ENCODE measurements at regions of chr10 and their contacts with region 1.

Region 1: GRCh38 chr10:76858721-76859120 is 778.9 kb downstream of the KCNMA1 start:
- DNase-seq: no peak
- H3K4me3 ChIP-seq: no peak overlapping the region
- H3K27ac ChIP-seq: no peak overlapping the region
- H3K4me1 ChIP-seq: no peaks in the 10 kb centered on the region
- H3K27me3 ChIP-seq: no peaks in the 10 kb centered on the region
- CTCF ChIP-seq: no peak
- POLR2A ChIP-seq: no peak

Region 2: DNA sequence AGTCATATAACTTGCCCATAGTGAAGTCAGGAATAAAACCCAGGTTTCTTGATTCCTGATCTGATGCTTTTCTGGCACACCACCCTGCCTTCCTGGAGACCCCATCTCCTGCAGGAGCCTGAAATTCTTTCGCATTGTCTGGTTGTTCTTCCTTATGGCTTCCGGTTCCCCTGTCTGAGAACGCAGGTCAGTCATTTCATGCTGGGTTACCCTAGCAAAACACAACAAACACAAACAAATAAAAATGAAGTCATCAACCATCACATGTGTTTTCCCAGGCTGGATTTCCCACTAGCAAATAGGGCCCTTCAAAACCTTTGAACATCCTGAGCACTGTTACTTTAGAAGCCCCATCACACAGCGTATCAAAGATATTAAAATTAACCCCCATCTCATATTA is 857.7 kb before region 1 on chr10:
- intact Hi-C with region 1: no loop called
- DNase-seq: no peak
- H3K4me3 ChIP-seq: no peak overlapping the region
- H3K27ac ChIP-seq: no peak overlapping the region
- H3K4me1 ChIP-seq: no peaks in the 10 kb centered on the region
- H3K27me3 ChIP-seq: no peaks in the 10 kb centered on the region
- CTCF ChIP-seq: no peak
- POLR2A ChIP-seq: no peak

Region 3: GRCh38 chr10:76743169-76743568 is 115.6 kb before region 1 on chr10:
- intact Hi-C with region 1: no loop called
- DNase-seq: no peak
- H3K4me3 ChIP-seq: no peak overlapping the region
- H3K27ac ChIP-seq: peak overlapping the region; percentile 3
- H3K4me1 ChIP-seq: no peaks in the 10 kb centered on the region
- H3K27me3 ChIP-seq: no peaks in the 10 kb centered on the region
- CTCF ChIP-seq: no peak
- POLR2A ChIP-seq: no peak

Region 4: GRCh38 chr10:76902949-76903348 is 44.2 kb after region 1 on chr10:
- intact Hi-C with region 1: loop called (anchors 2 kb)
- DNase-seq: no peak
- H3K4me3 ChIP-seq: no peak overlapping the region
- H3K27ac ChIP-seq: no peak overlapping the region
- H3K4me1 ChIP-seq: no peaks in the 10 kb centered on the region
- H3K27me3 ChIP-seq: no peaks in the 10 kb centered on the region
- CTCF ChIP-seq: no peak
- POLR2A ChIP-seq: no peak